Heart left ventricle (tissue), 16 donors: ENCODE measurements at regions of chr18 and their contacts with region 1.

Region 1: DNA sequence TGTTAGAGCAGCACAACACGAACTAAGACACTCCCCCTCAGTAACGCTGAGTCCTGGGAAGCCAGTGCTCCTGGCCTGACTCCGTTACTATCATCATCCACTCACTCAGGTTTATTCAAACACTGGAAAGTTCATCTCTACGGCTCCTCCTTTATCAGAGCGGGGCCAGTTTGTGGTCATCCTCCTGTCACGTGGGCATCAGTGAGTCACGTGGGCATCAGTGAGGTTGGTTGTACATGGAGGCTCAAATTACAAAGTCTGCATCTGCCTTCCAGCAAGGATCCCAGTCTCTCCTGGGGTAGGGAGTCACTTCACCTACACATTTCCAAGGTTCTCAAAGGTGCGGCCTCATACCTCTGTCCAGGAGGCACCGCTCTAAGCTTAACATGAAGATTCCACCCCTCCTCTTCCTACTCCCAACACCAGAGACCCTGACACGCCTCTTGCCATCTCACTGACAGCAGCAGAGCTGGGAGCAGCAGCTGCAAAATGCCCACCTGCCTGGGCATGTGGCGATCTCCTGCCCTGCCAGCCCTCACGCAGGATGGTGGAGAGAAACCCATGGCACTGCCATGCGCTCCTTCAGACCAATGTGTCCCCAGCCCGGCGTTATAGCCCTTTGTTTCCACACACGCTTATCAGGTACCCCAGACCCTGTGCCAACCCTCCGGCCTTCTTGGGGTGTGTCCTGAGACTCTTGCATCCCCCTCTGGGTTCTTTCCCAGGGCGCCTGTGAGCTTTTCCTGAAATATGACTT is 99.2 kb upstream of the PTPRM start:
- DNase-seq: peak in 1 of 5 donors; percentile 22
- ATAC-seq: no peak
- H3K4me3 ChIP-seq: no peak overlapping the region
- H3K27ac ChIP-seq: no peak overlapping the region
- H3K4me1 ChIP-seq: peaks cover 0 to 28% (median 8%) of the 10 kb centered on the region in 12 donors
- H3K27me3 ChIP-seq: no peaks in the 10 kb centered on the region
- CTCF ChIP-seq: no peak
- POLR2A ChIP-seq: no peak

Region 2: DNA sequence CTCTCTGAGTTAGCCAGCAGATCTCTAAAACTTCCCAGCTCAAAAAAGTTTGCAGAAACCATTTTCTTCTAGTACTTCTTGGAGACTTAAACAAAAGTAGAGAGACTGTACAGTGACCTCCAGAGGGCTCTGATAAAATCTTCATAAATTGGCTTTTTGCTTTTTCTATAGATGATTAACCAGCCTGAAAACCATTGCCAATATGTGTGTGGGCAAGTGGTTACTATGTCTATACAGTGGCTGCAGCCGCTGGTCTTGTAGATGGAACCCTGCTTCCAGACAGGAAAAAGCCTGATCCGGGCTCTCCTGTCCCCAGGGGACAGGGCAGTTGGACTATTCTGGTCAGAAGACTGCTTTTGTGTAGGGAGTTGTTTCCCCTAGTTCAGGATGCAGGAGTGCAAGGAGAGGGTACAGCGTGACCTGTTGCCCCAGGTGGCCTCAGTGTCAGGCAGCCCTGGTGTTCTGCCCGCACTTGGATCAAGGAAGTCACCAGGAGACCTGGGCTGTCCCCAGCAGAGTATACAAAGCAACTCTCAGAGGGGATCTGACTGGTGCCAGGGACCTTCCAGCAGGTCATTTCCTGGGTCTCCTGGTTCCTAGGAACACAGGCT is 91.9 kb after region 1 on chr18:
- intact Hi-C with region 1: loop called in 2 of 10 experiments (anchors 5 kb)
- DNase-seq: peak in 4 of 5 donors; percentile 21 to 39 (median 30)
- ATAC-seq: peak in 3 of 4 donors; percentile 36 to 68 (median 51)
- H3K4me3 ChIP-seq: no peak overlapping the region
- H3K27ac ChIP-seq: peak overlapping the region in 9 of 12 donors; percentile 25 to 65 (median 40)
- H3K4me1 ChIP-seq: peaks cover 0 to 54% (median 18%) of the 10 kb centered on the region in 12 donors
- H3K27me3 ChIP-seq: no peaks in the 10 kb centered on the region
- CTCF ChIP-seq: no peak
- POLR2A ChIP-seq: no peak